ENCODE measurements at regions of chr11 and their contacts with region 1.

Region 1: DNA sequence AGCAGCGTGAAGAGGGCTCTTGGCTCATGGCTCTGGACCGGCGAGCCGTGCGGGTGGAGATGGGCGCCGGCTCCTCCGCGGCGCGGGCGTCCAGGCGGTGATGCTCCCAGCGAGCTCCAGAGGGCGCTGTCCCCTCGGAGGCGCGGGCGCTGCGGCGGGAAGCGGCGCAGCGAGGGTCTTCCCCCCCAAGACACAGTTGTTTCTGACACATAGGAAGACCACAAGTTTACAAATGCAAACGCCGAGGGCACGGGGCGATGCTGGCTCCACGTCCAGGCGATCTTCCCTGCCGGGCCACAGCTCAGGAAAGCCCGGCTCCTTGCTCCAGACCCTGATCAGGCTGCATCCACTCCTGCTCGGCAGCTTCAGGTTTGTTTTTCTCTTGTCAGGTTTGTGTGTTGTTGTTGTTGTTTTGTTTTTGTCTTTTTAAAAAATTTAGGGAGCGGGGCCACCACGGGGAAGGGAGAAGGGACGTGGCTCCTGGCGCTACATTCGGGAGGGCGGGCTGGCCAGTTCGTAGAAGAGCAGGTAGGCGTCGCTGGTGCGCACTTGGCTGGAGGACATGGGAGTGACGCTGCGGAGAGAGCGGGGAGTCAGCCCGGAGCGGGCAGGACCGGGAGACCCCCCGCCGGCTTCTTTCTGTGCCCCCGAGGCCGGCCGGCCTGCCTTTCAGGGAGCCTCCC is 10.0 kb upstream of the MFRP start:
- DNase-seq: peak in 1 of 2 experiments; percentile 93
- H3K4me3 ChIP-seq: peak overlapping the region; percentile 26 to 80 (median 76); a peak in 7 of 8 replicates
- H3K27ac ChIP-seq: no peak overlapping the region
- H3K4me1 ChIP-seq: peaks cover 6 to 9% (median 8%) of the 10 kb centered on the region in 4 experiments
- H3K27me3 ChIP-seq: peaks cover 0 to 4% (median under 1%) of the 10 kb centered on the region in 4 experiments; a peak in 3 of 7 replicates
- CTCF ChIP-seq: peak; percentile 77 to 97 (median 93)
- EP300 ChIP-seq: peak in 1 of 2 experiments; percentile 90; a peak in 1 of 3 replicates
- POLR2A ChIP-seq: no peak
- RAD21 ChIP-seq: peak; percentile 74 to 85

Region 2: GRCh38 chr11:119334174-119334930 is 22.1 kb before region 1 on chr11 and contains the start of gene RNF26:
- CTCF ChIA-PET with region 1: interaction called, 84 read pairs
- POLR2A ChIA-PET with region 1: interaction called, 8 read pairs
- DNase-seq: peak; percentile 95 to 98
- H3K4me3 ChIP-seq: peak within 1 kb of the TSS; percentile 92 to 96 (median 96)
- H3K27ac ChIP-seq: peak within 1 kb of the TSS; percentile 89
- H3K4me1 ChIP-seq: peaks cover 4 to 24% (median 18%) of the 10 kb centered on the region in 4 experiments
- H3K27me3 ChIP-seq: peaks cover 3 to 8% (median 6%) of the 10 kb centered on the region in 4 experiments; a peak in 6 of 7 replicates
- CTCF ChIP-seq: no peak
- EP300 ChIP-seq: no peak
- POLR2A ChIP-seq: peak in 1 of 2 experiments; percentile 88; a peak in 2 of 3 replicates
- RAD21 ChIP-seq: no peak
- total RNA-seq, gene RNF26: 82.7 and 86.6 TPM in 2 replicates

Region 3: GRCh38 chr11:119339589-119340343 is 16.7 kb before region 1 on chr11:
- CTCF ChIA-PET with region 1: interaction called, 84 read pairs
- POLR2A ChIA-PET with region 1: interaction called, 8 read pairs
- DNase-seq: peak in 1 of 2 experiments; percentile 94
- H3K4me3 ChIP-seq: peak overlapping the region; percentile 34 to 69 (median 43)
- H3K27ac ChIP-seq: no peak overlapping the region
- H3K4me1 ChIP-seq: peaks cover 5 to 37% (median 28%) of the 10 kb centered on the region in 4 experiments
- H3K27me3 ChIP-seq: peaks cover 12 to 42% (median 33%) of the 10 kb centered on the region in 4 experiments
- CTCF ChIP-seq: peak in 2 of 3 experiments; percentile 71 to 86; a peak in 3 of 4 replicates
- EP300 ChIP-seq: peak in 1 of 2 experiments; percentile 52; a peak in 1 of 3 replicates
- POLR2A ChIP-seq: no peak
- RAD21 ChIP-seq: peak; percentile 54 to 70

Region 4: GRCh38 chr11:119373921-119374631 is 17.6 kb after region 1 on chr11:
- CTCF ChIA-PET with region 1: interaction called, 474 read pairs
- POLR2A ChIA-PET with region 1: interaction called, 32 read pairs
- DNase-seq: peak in 1 of 2 experiments; percentile 97
- H3K4me3 ChIP-seq: no peak overlapping the region
- H3K27ac ChIP-seq: no peak overlapping the region
- H3K4me1 ChIP-seq: peaks cover 8 to 51% (median 36%) of the 10 kb centered on the region in 4 experiments
- H3K27me3 ChIP-seq: peaks cover 0 to 3% (median 0%) of the 10 kb centered on the region in 4 experiments; a peak in 1 of 7 replicates
- CTCF ChIP-seq: peak; percentile 82 to 92 (median 89)
- EP300 ChIP-seq: no peak
- POLR2A ChIP-seq: no peak
- RAD21 ChIP-seq: peak; percentile 92 to 95

Region 5: GRCh38 chr11:119397740-119398139 is 41.2 kb after region 1 on chr11:
- CTCF ChIA-PET with region 1: interaction called, 10 read pairs
- POLR2A ChIA-PET with region 1: no interaction called
- DNase-seq: no peak
- H3K4me3 ChIP-seq: no peak overlapping the region
- H3K27ac ChIP-seq: no peak overlapping the region
- H3K4me1 ChIP-seq: no peaks in the 10 kb centered on the region; a peak in 1 of 7 replicates
- H3K27me3 ChIP-seq: no peaks in the 10 kb centered on the region
- CTCF ChIP-seq: no peak
- EP300 ChIP-seq: no peak
- POLR2A ChIP-seq: no peak
- RAD21 ChIP-seq: no peak

Region 6: GRCh38 chr11:119421941-119422808 is 65.7 kb after region 1 on chr11:
- CTCF ChIA-PET with region 1: interaction called, 13 read pairs
- POLR2A ChIA-PET with region 1: interaction called, 4 read pairs
- DNase-seq: no peak
- H3K4me3 ChIP-seq: peak overlapping the region; percentile 76 to 91 (median 90)
- H3K27ac ChIP-seq: peak overlapping the region; percentile 43
- H3K4me1 ChIP-seq: peaks cover 20 to 40% (median 27%) of the 10 kb centered on the region in 4 experiments
- H3K27me3 ChIP-seq: no peaks in the 10 kb centered on the region; a peak in 1 of 7 replicates
- CTCF ChIP-seq: no peak
- EP300 ChIP-seq: no peak
- POLR2A ChIP-seq: peak in 1 of 2 experiments; percentile 37; a peak in 1 of 3 replicates
- RAD21 ChIP-seq: no peak

Measured in H1 (cell line).